H1 (cell line): ENCODE measurements at regions of chr17 and their contacts with region 1.

Region 1: DNA sequence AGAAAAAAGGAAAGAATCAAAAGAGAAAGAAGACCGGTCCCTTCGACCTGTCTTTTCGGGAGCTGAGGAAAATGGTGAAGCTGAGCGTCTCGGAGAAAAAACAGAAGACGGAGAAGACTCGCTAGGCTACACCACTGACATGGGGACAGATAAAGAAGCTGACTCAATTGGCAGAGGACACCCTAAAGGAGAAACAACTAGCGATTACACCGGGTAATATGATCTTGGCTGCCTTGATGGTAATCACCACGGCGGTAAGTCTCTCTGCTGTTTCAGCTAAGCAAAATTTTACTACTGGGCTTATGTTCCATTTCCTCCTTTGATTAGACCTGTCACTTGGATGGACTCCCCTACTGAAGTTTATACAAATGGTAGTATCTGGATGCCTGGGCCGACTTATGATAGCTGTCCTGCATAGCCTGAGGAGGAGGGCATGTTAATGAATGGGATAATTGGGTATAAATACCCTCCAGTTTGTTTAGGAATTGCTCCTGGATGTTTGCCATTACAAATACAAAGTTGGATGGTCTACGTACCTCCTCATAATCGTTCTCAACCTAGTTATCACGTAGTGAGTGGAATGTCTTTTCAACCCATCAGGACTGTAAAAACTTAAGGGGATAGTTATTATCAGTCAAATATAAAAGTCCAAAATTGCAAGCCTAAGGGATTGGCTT is 24.1 kb downstream of the ALOX15B start:
- DNase-seq: no peak
- H3K4me3 ChIP-seq: peak overlapping the region; percentile 32 to 56 (median 42)
- H3K27ac ChIP-seq: no peak overlapping the region
- H3K4me1 ChIP-seq: peaks cover 7 to 29% (median 15%) of the 10 kb centered on the region in 4 experiments
- H3K27me3 ChIP-seq: peaks cover 5 to 20% (median 17%) of the 10 kb centered on the region in 4 experiments; a peak in 5 of 7 replicates
- CTCF ChIP-seq: no peak
- EP300 ChIP-seq: no peak
- POLR2A ChIP-seq: no peak
- RAD21 ChIP-seq: no peak

Region 2: DNA sequence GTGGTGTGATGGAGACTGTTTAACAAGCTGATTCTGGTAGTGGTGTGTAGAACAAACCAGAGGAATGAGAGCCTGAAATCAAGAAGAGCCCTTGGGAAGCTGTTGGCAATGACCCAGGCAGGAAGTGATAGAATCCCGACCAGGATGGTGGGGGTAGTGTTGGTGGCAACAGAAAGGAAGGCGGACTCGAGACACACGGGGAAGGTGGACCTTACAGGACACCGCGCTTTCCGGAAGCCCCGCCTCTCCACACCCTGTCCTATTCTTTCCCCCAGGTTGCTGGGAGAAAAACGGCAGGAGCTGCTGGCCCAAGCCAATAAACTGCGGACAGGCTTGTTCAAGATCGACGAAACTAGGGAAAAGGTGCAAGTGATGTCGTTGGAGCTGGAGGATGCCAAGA is 259.0 kb before region 1 on chr17:
- CTCF ChIA-PET with region 1: no interaction called
- POLR2A ChIA-PET with region 1: no interaction called
- DNase-seq: no peak
- H3K4me3 ChIP-seq: no peak overlapping the region
- H3K27ac ChIP-seq: no peak overlapping the region
- H3K4me1 ChIP-seq: no peaks in the 10 kb centered on the region
- H3K27me3 ChIP-seq: no peaks in the 10 kb centered on the region; a peak in 2 of 7 replicates
- CTCF ChIP-seq: no peak
- EP300 ChIP-seq: no peak
- POLR2A ChIP-seq: no peak
- RAD21 ChIP-seq: no peak

Region 3: DNA sequence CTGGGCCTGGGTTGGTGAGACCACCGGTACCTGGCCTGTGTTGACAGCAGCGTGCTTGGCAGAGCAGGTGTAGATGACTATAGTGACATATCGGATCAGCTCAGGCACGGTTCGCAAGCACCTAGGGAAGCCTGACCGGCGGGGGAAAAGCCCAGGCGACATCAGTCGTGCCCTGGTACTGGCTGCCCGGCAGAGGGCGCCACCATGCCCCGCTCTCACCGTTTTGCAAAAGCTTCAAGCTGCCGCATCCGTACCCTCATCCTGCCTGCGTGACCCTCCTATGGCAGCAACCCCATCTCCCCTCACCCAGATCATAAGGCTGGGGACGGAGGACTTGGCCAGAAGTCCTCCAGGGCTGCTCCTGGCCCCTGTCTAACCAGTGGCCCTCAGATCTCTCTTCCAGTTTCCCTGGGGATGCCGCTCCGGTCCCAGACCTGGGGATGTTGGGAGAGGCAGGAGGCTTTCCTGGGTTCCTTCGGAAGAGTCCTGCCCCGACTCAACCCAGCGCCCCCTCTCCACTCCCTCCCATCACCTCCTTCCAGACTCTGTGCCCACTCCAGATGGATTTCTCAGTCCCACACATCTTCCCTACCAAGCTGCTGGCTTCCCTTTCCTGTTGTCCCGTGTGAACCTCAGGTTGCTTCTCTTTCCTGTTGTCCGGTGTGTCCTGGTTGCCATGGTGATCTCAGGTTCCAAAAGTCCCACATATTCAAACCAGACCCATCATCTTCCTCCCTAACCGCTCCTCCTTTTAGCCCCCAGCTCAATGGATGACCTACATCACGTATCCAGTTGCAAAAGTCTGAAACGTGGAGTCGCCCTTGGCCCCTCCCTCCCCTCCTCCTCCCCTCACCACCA is 10.9 kb after region 1 on chr17:
- CTCF ChIA-PET with region 1: interaction called, 270 read pairs
- POLR2A ChIA-PET with region 1: interaction called, 10 read pairs
- DNase-seq: peak in 1 of 2 experiments; percentile 93
- H3K4me3 ChIP-seq: peak overlapping the region; percentile 11 to 65 (median 45); a peak in 6 of 8 replicates
- H3K27ac ChIP-seq: no peak overlapping the region
- H3K4me1 ChIP-seq: peaks cover 0 to 22% (median 9%) of the 10 kb centered on the region in 4 experiments; a peak in 5 of 7 replicates
- H3K27me3 ChIP-seq: peaks cover 39 to 79% (median 62%) of the 10 kb centered on the region in 4 experiments
- CTCF ChIP-seq: peak; percentile 80 to 98 (median 98)
- EP300 ChIP-seq: no peak
- POLR2A ChIP-seq: no peak
- RAD21 ChIP-seq: peak; percentile 43 to 53; a peak in 3 of 4 replicates

Region 4: DNA sequence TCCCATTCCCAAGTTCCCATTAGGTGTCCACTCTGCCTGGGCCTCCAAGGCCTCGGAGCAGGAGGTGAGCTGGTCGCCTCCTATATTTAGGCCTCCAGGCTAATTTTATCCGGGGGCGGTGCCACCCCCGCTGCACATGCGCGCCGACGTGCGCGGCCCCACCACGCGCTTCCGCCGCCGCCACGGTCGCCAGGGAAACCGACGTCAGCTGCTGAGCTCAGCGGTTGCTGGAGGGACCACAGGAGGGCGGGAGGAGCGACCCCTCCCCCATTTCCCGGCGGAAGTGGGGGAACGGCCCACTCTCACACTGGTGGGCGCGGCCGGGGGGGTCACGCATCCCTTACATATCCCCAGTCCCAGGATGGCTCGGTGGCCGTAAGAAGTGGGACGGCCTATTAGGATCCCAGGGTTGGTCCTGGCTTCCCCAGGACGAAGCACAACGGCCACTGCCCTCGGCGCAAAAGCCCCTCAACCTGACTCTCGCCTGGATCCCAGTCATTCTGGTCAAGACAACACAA is 88.2 kb after region 1 on chr17:
- CTCF ChIA-PET with region 1: no interaction called
- POLR2A ChIA-PET with region 1: no interaction called
- DNase-seq: peak in 1 of 2 experiments; percentile 81
- H3K4me3 ChIP-seq: peak overlapping the region; percentile 79 to 93 (median 84)
- H3K27ac ChIP-seq: no peak overlapping the region
- H3K4me1 ChIP-seq: peaks cover 12 to 31% (median 19%) of the 10 kb centered on the region in 4 experiments
- H3K27me3 ChIP-seq: no peaks in the 10 kb centered on the region
- CTCF ChIP-seq: no peak
- EP300 ChIP-seq: no peak
- POLR2A ChIP-seq: no peak
- RAD21 ChIP-seq: no peak